AG04449 (cell line): ENCODE measurements at regions of chr6 and their contacts with region 1.

Region 1: GRCh38 chr6:135145063-135145800 is 35.9 kb upstream of the MYB start:
- DNase-seq: no peak
- H3K4me3 ChIP-seq: no peak overlapping the region
- CTCF ChIP-seq: peak; percentile 50

Region 2: DNA sequence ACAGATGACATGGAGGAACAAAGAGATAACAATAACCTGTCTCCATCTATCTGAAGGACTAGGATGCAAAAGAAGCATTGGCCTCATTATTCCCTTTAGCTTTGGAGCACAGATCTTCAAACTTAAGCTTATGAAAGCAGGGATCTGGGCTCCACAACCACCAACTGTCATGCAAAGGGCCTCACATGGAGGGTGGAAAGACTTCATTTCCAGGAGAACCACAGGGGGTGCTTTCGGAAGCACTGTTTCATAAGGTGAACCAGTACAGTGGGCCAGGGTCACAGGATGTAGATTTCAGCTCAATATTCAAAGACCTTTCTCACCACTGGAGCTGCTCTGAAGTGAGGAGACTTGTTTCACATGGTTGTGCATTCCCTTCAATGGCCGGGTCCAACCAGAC is 19.2 kb before region 1 on chr6:
- CTCF ChIA-PET with region 1: interaction called, 12 read pairs
- POLR2A ChIA-PET with region 1: no interaction called
- DNase-seq: no peak
- H3K4me3 ChIP-seq: no peak overlapping the region
- CTCF ChIP-seq: no peak

Region 3: DNA sequence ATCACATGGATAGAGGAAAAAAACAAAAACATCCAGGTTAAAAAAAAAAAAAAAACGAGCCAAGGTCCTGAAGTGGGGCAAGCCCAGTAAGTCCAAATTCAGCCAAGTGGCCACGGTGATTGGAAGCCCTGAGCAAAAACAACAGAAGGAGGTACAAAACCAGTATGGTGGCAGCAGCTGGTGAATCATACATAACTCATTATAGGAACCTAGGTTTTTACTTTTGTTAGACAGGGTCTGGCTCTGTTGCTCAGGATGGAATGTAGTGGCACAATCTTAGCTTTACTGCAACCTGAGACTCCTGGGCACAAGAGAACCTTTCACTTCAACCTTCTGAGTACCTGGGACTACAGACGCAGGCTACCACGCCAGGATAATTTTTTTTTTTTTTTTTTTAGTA is 13.2 kb after region 1 on chr6:
- CTCF ChIA-PET with region 1: interaction called, 18 read pairs
- POLR2A ChIA-PET with region 1: interaction called, 3 read pairs
- DNase-seq: no peak
- H3K4me3 ChIP-seq: no peak overlapping the region
- CTCF ChIP-seq: no peak

Region 4: DNA sequence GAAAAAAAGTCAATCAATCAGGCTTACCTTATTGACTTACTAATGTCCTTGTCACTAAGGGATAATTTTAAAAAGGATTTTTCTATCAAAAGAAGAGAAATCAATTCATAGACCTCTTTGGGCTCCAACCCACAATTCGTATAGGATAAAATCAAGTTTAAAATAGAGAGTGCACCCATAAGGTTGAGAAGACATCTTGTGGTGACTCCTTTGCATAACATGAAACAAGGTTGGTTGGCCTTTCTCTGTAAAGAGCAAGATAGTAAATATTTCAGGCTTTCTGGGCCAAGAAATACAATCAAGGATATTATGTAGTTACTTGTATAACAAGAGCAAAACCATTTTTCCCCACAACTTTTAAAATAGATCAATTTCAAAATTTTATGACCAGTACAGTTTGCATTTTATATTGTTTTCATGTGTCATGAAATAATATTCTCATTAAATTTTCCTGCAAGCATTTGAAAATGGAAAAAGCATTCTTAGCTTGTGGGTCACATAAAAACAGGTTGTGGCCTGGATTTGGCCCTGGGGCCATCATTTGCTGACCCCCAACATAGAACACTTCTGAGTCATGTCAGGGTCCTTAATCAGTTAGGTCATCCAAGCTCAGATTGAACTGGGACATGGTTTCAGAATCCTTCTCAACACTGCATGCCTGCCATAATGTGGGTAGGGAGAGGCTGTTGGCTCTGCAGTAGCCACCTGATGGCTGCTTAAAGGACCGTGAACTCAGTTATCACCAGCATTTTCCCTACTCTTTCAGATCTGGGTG is 112.6 kb after region 1 on chr6:
- CTCF ChIA-PET with region 1: interaction called, 22 read pairs
- POLR2A ChIA-PET with region 1: no interaction called
- DNase-seq: no peak
- H3K4me3 ChIP-seq: no peak overlapping the region
- CTCF ChIP-seq: no peak

Region 5: GRCh38 chr6:135411339-135411738 is 266.1 kb after region 1 on chr6:
- CTCF ChIA-PET with region 1: interaction called, 10 read pairs
- POLR2A ChIA-PET with region 1: no interaction called
- DNase-seq: no peak
- H3K4me3 ChIP-seq: no peak overlapping the region
- CTCF ChIP-seq: no peak

Region 6: GRCh38 chr6:135438907-135439535 is 293.8 kb after region 1 on chr6:
- CTCF ChIA-PET with region 1: interaction called, 31 read pairs
- POLR2A ChIA-PET with region 1: no interaction called
- DNase-seq: no peak
- H3K4me3 ChIP-seq: no peak overlapping the region
- CTCF ChIP-seq: peak; percentile 17